Right cardiac atrium (tissue), 5 donors: ENCODE measurements at regions of chr4 and their contacts with region 1.

Region 1: DNA sequence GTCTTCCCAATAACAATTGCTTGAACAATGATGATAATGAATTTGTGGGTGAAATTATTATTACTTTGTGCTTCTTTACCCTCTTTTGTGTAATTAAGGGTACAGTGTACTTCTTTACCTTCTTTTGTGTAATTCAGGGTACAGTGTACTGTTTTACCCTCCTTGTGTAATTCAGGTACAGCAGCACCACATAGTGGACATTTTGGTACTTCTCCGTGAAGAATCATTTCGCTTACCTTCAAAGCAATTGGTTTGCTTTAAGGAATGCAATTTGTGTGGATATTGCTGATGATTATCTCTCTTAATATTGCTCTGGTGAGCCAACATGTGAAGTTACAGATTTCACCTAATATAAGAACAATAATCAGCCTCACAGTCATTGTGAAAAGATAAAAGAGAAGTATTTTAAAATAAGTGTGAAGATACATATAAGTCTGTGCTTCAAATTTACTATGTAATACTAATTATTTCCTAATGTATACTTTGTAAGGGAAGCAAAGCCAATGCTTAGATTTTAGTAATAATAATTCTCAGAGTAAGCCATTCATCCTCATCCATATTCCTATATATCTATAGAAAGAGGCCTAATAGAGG is 27.2 kb upstream of the SEC24B start:
- DNase-seq: no peak
- ATAC-seq: peak; percentile 64 to 78
- H3K4me3 ChIP-seq: no peak overlapping the region
- H3K27ac ChIP-seq: no peak overlapping the region
- H3K4me1 ChIP-seq: no peaks in the 10 kb centered on the region
- H3K27me3 ChIP-seq: no peaks in the 10 kb centered on the region

Region 2: GRCh38 chr4:108834835-108835384 is 571.5 kb before region 1 on chr4:
- intact Hi-C with region 1: loop called (anchors 5 to 10 kb)
- DNase-seq: no peak
- ATAC-seq: no peak
- H3K4me3 ChIP-seq: no peak overlapping the region
- H3K27ac ChIP-seq: no peak overlapping the region
- H3K4me1 ChIP-seq: no peaks in the 10 kb centered on the region
- H3K27me3 ChIP-seq: no peaks in the 10 kb centered on the region

Region 3: GRCh38 chr4:109146499-109146898 is 259.9 kb before region 1 on chr4:
- intact Hi-C with region 1: no loop called
- DNase-seq: no peak
- ATAC-seq: no peak
- H3K4me3 ChIP-seq: no peak overlapping the region
- H3K27ac ChIP-seq: no peak overlapping the region
- H3K4me1 ChIP-seq: no peaks in the 10 kb centered on the region
- H3K27me3 ChIP-seq: no peaks in the 10 kb centered on the region